Thyroid gland (tissue), 4 donors: ENCODE measurements at regions of chr12 and their contacts with region 1.

Region 1: DNA sequence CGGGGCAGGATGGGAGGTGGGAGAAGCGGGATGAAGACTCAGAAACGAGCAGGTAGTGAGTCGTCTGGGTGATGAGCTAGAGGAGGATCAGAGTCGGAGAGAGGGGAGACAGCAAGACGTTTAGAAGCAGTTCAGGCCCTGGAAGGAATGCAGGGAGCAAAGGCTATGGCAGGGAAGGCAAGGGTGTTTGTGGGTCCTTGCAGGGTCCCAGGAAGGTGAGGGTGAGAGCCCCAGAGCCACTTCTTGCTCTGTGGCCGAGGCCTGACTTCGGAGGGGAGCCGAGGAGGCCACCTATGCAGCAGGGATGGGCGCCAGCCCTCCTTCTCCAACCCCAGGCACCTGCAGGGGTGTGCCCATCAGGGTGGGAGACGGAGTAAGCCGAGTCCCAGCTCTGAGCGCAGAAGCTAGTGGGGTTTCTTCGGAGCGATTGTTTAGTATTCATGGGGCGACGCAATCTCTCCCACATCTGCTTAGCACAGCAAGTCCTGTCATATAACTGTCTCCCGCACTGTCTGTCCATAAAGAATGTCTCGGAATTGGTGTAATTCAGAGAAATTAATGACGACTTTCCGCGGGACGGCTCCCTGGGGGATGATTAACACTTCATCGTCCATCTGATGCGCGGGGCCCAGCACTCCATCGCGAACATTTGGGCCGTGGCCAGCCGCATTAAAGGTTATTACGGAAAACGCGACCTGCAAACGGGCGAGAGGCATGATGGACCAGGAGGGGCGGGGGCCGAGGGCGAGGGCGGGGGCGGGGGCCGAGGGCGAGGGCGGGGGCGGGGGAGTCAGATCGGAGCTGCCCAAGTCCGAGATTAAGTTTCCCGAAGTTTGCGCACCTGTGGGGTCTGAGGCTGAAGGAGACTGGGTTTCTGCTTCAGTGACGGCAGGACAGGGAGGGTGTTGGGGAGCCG is 12.2 kb upstream of the CALCOCO1 start:
- DNase-seq: no peak
- H3K4me3 ChIP-seq: no peak overlapping the region
- H3K27ac ChIP-seq: no peak overlapping the region
- H3K4me1 ChIP-seq: peaks cover 8 to 23% of the 10 kb centered on the region in 2 donors
- H3K27me3 ChIP-seq: peaks cover 12% of the 10 kb centered on the region
- CTCF ChIP-seq: no peak
- POLR2A ChIP-seq: no peak

Region 2: GRCh38 chr12:53701518-53702260 is 37.8 kb before region 1 on chr12:
- intact Hi-C with region 1: loop called (anchors 2 kb)
- DNase-seq: peak; percentile 78 to 81
- H3K4me3 ChIP-seq: no peak overlapping the region
- H3K27ac ChIP-seq: no peak overlapping the region
- H3K4me1 ChIP-seq: peaks cover 0 to 3% of the 10 kb centered on the region in 2 donors
- H3K27me3 ChIP-seq: peaks cover 9% of the 10 kb centered on the region
- CTCF ChIP-seq: peak; percentile 60 to 93 (median 87)
- POLR2A ChIP-seq: no peak